Naive thymus-derived CD4-positive, alpha-beta T cell (primary cell): ENCODE measurements at regions of chr2 and their contacts with region 1.

Region 1: GRCh38 chr2:207692206-207693065 is 19.0 kb upstream of the CCNYL1 start:
- DNase-seq: peak in 8 of 9 donors; percentile 21 to 58 (median 41)
- ATAC-seq: peak; percentile 82
- H3K4me3 ChIP-seq: no peak overlapping the region
- H3K4me3 Mint-ChIP-seq: peak overlapping the region in 2 of 10 donors; percentile 35 to 56
- H3K27ac ChIP-seq: no peak overlapping the region
- H3K27ac Mint-ChIP-seq: no peak overlapping the region
- H3K4me1 ChIP-seq: no peaks in the 10 kb centered on the region
- H3K4me1 Mint-ChIP-seq: peaks cover 0 to 6% (median 5%) of the 10 kb centered on the region in 7 donors
- H3K27me3 ChIP-seq: no peaks in the 10 kb centered on the region
- H3K27me3 Mint-ChIP-seq: peaks cover 0 to 5% (median 0%) of the 10 kb centered on the region in 5 donors

Region 2: GRCh38 chr2:207725873-207726578 is 33.6 kb after region 1 on chr2:
- CTCF ChIA-PET with region 1: no interaction called
- POLR2A ChIA-PET with region 1: no interaction called
- intact Hi-C with region 1: loop called in 1 of 2 experiments (anchors 5 kb)
- DNase-seq: peak in 5 of 9 donors; percentile 25 to 38 (median 37)
- ATAC-seq: no peak
- H3K4me3 ChIP-seq: no peak overlapping the region
- H3K4me3 Mint-ChIP-seq: peak overlapping the region in 1 of 10 donors; percentile 19
- H3K27ac ChIP-seq: no peak overlapping the region
- H3K27ac Mint-ChIP-seq: peak overlapping the region in 4 of 9 donors; percentile 41 to 67 (median 52)
- H3K4me1 ChIP-seq: peaks cover 0 to 6% of the 10 kb centered on the region in 2 donors
- H3K4me1 Mint-ChIP-seq: peaks cover 11 to 50% (median 41%) of the 10 kb centered on the region in 7 donors
- H3K27me3 ChIP-seq: no peaks in the 10 kb centered on the region
- H3K27me3 Mint-ChIP-seq: no peaks in the 10 kb centered on the region

Region 3: GRCh38 chr2:207792244-207792785 is 99.9 kb after region 1 on chr2:
- CTCF ChIA-PET with region 1: no interaction called
- POLR2A ChIA-PET with region 1: no interaction called
- intact Hi-C with region 1: no loop called
- DNase-seq: no peak
- ATAC-seq: peak; percentile 57
- H3K4me3 ChIP-seq: no peak overlapping the region
- H3K4me3 Mint-ChIP-seq: no peak overlapping the region
- H3K27ac ChIP-seq: no peak overlapping the region
- H3K27ac Mint-ChIP-seq: no peak overlapping the region
- H3K4me1 ChIP-seq: no peaks in the 10 kb centered on the region
- H3K4me1 Mint-ChIP-seq: no peaks in the 10 kb centered on the region
- H3K27me3 ChIP-seq: no peaks in the 10 kb centered on the region
- H3K27me3 Mint-ChIP-seq: peaks cover 0 to 11% (median 2%) of the 10 kb centered on the region in 5 donors

Region 4: DNA sequence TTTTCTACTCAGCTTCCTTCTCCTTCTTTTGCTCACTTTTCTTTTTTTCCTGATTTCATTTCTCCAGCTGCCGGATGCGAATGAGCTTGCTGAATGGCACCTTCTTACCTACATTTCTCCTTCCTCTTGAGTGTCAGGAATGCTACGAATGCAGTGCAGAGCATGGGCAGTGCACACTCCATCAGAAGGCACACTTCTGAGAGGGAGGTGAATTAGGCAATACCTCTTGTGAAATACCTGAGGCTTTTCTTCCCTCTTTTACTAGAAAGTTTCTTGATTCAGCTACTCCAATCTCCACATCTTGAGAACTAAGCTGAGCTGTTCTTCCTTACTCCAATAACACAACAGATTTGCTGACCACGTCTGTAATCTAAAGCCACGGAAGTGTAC is 281.8 kb after region 1 on chr2:
- CTCF ChIA-PET with region 1: interaction called, 4 read pairs
- POLR2A ChIA-PET with region 1: no interaction called
- intact Hi-C with region 1: loop called in 1 of 2 experiments (anchors 1 kb)
- DNase-seq: no peak
- ATAC-seq: peak; percentile 34
- H3K4me3 ChIP-seq: no peak overlapping the region
- H3K4me3 Mint-ChIP-seq: no peak overlapping the region
- H3K27ac ChIP-seq: no peak overlapping the region
- H3K27ac Mint-ChIP-seq: peak overlapping the region in 2 of 9 donors; percentile 2 to 65
- H3K4me1 ChIP-seq: no peaks in the 10 kb centered on the region
- H3K4me1 Mint-ChIP-seq: peaks cover 5 to 43% (median 31%) of the 10 kb centered on the region in 7 donors
- H3K27me3 ChIP-seq: no peaks in the 10 kb centered on the region
- H3K27me3 Mint-ChIP-seq: no peaks in the 10 kb centered on the region

Region 5: GRCh38 chr2:208033758-208034502 is 341.5 kb after region 1 on chr2:
- CTCF ChIA-PET with region 1: no interaction called
- POLR2A ChIA-PET with region 1: no interaction called
- intact Hi-C with region 1: loop called in 1 of 2 experiments (anchors 5 kb)
- DNase-seq: peak in 5 of 9 donors; percentile 12 to 32 (median 16)
- ATAC-seq: peak; percentile 53
- H3K4me3 ChIP-seq: no peak overlapping the region
- H3K4me3 Mint-ChIP-seq: no peak overlapping the region
- H3K27ac ChIP-seq: no peak overlapping the region
- H3K27ac Mint-ChIP-seq: no peak overlapping the region
- H3K4me1 ChIP-seq: no peaks in the 10 kb centered on the region
- H3K4me1 Mint-ChIP-seq: peaks cover 0 to 2% (median 0%) of the 10 kb centered on the region in 7 donors
- H3K27me3 ChIP-seq: no peaks in the 10 kb centered on the region
- H3K27me3 Mint-ChIP-seq: peaks cover 0 to 17% (median 0%) of the 10 kb centered on the region in 5 donors